G401 (cell line): ENCODE measurements at regions of chr1 and their contacts with region 1.

Region 1: DNA sequence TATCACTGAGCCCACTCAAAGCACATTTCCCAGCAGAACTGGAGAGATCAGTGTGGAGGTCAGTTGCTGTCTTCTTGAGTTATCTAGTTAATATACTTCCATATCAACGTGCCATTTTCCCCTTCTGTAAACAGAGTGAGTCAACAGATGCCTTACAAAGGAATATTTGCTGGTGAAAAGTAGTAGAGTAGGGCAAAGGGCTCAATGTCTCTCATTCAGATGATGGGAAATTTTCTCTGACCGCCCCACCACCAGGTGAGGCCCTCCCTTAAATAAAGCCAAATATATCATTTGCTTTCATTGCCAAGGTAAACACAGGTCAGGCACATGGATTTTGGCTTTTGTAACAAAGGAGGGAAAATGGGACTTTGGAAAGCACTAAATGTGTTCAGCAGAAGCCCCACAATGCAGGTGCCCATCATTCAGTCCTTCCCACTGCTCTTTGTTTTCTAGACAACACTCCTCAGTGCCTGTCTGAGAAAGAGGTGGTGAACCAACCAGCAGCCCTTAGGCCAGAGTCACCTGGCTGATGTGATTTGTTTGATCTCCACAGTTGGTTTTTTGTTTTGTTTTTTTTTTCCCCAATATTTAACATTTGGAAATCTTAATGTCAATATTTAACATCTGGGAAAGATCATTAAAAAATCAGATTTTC is 40.5 kb upstream of the SAMD13 start:
- DNase-seq: no peak

Region 2: GRCh38 chr1:84096176-84096575 is 164.8 kb before region 1 on chr1:
- in situ Hi-C with region 1: no loop called
- DNase-seq: no peak

Region 3: GRCh38 chr1:84223751-84224432 is 37.1 kb before region 1 on chr1:
- in situ Hi-C with region 1: no loop called
- DNase-seq: no peak

Region 4: GRCh38 chr1:84387480-84388163 is 126.6 kb after region 1 on chr1:
- in situ Hi-C with region 1: no loop called
- DNase-seq: peak; percentile 4

Region 5: GRCh38 chr1:84550826-84551225 is 289.8 kb after region 1 on chr1:
- in situ Hi-C with region 1: no loop called
- DNase-seq: no peak

Region 6: GRCh38 chr1:84753516-84754385 is 492.8 kb after region 1 on chr1:
- in situ Hi-C with region 1: loop called (anchors 10 kb)
- DNase-seq: peak; percentile 95